HCT116 (cell line): ENCODE measurements at regions of chr18 and their contacts with region 1.

Region 1: GRCh38 chr18:8696749-8697211 is 8.6 kb upstream of the MTCL1 start:
- DNase-seq: peak; percentile 23
- ATAC-seq: peak; percentile 96
- H3K4me3 ChIP-seq: no peak overlapping the region
- H3K27ac ChIP-seq: no peak overlapping the region
- H3K4me1 ChIP-seq: peaks cover 2 to 8% of the 10 kb centered on the region in 2 experiments; a peak in 2 of 4 replicates
- H3K27me3 ChIP-seq: no peaks in the 10 kb centered on the region
- CTCF ChIP-seq: peak; percentile 68 to 85 (median 85)
- POLR2A ChIP-seq: no peak
- RAD21 ChIP-seq: peak; percentile 74

Region 2: GRCh38 chr18:8601277-8602032 is 95.3 kb before region 1 on chr18:
- CTCF ChIA-PET with region 1: no interaction called
- POLR2A ChIA-PET with region 1: no interaction called
- RAD21 ChIA-PET with region 1: no interaction called
- intact Hi-C with region 1: no loop called
- DNase-seq: no peak
- ATAC-seq: no peak
- H3K4me3 ChIP-seq: no peak overlapping the region
- H3K27ac ChIP-seq: no peak overlapping the region
- H3K4me1 ChIP-seq: no peaks in the 10 kb centered on the region
- H3K27me3 ChIP-seq: no peaks in the 10 kb centered on the region; the same call in 1 of the 2 replicates
- CTCF ChIP-seq: no peak
- POLR2A ChIP-seq: no peak
- RAD21 ChIP-seq: no peak

Region 3: DNA sequence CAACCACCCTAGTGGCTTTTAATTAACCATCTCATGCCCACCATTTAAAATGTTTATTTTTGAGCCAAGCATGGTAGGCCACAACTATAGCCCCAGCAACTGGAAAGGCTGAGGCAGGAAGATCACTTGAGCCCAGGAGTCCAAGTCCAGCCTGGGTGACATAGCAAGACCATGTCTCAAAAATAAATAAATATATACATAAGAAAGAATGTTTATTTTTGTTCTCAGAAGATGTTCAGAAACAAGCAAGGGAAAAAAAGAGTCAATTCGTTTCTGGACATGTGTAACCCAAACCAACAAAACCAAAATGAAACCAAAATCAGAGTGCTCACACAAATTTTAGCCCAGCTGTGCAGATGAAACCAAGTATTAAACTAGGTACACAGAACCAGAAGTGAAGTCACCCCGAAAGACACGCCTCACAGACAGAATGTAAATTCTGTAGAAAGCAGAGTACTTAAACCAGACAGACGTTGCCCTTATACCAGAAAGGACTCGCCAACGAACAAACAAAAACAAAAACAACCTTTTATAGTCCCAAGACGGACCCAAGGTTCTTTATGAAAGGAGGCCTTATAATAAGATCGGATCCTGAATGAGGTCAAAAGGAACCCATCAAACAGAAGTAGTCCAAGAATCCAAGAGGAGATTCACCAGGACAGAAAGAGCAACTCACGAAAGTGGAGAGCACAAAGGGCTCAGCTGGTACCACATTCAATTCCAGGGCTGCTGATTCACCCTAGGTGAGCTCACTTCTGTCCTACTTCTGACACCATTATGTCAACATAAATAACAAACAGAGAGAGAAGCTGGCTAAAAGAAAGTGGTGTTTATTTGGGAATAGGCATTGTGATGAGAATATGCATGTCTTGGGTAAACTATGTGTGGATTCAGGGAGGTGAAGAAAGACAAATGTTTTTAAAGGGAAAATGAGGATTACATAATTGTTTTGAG is 23.2 kb before region 1 on chr18:
- CTCF ChIA-PET with region 1: interaction called, 12 read pairs
- POLR2A ChIA-PET with region 1: no interaction called
- RAD21 ChIA-PET with region 1: no interaction called
- intact Hi-C with region 1: no loop called
- DNase-seq: no peak
- ATAC-seq: no peak
- H3K4me3 ChIP-seq: no peak overlapping the region
- H3K27ac ChIP-seq: no peak overlapping the region
- H3K4me1 ChIP-seq: no peaks in the 10 kb centered on the region
- H3K27me3 ChIP-seq: no peaks in the 10 kb centered on the region
- CTCF ChIP-seq: no peak
- POLR2A ChIP-seq: no peak
- RAD21 ChIP-seq: no peak

Region 4: GRCh38 chr18:8685141-8685913 is 11.5 kb before region 1 on chr18:
- CTCF ChIA-PET with region 1: interaction called, 21 read pairs
- POLR2A ChIA-PET with region 1: no interaction called
- RAD21 ChIA-PET with region 1: no interaction called
- intact Hi-C with region 1: no loop called
- DNase-seq: no peak
- ATAC-seq: no peak
- H3K4me3 ChIP-seq: no peak overlapping the region
- H3K27ac ChIP-seq: no peak overlapping the region
- H3K4me1 ChIP-seq: peaks cover 0 to 6% of the 10 kb centered on the region in 2 experiments; a peak in 1 of 4 replicates
- H3K27me3 ChIP-seq: no peaks in the 10 kb centered on the region
- CTCF ChIP-seq: no peak
- POLR2A ChIP-seq: no peak
- RAD21 ChIP-seq: no peak

Region 5: GRCh38 chr18:8794133-8794986 is 97.6 kb after region 1 on chr18:
- CTCF ChIA-PET with region 1: interaction called, 3 read pairs
- POLR2A ChIA-PET with region 1: no interaction called
- RAD21 ChIA-PET with region 1: no interaction called
- intact Hi-C with region 1: loop called (anchors 10 kb)
- DNase-seq: peak; percentile 23
- ATAC-seq: peak; percentile 37
- H3K4me3 ChIP-seq: no peak overlapping the region
- H3K27ac ChIP-seq: peak overlapping the region; percentile 55
- H3K4me1 ChIP-seq: peaks cover 47 to 57% of the 10 kb centered on the region in 2 experiments
- H3K27me3 ChIP-seq: no peaks in the 10 kb centered on the region
- CTCF ChIP-seq: no peak
- POLR2A ChIP-seq: no peak
- RAD21 ChIP-seq: no peak

Region 6: DNA sequence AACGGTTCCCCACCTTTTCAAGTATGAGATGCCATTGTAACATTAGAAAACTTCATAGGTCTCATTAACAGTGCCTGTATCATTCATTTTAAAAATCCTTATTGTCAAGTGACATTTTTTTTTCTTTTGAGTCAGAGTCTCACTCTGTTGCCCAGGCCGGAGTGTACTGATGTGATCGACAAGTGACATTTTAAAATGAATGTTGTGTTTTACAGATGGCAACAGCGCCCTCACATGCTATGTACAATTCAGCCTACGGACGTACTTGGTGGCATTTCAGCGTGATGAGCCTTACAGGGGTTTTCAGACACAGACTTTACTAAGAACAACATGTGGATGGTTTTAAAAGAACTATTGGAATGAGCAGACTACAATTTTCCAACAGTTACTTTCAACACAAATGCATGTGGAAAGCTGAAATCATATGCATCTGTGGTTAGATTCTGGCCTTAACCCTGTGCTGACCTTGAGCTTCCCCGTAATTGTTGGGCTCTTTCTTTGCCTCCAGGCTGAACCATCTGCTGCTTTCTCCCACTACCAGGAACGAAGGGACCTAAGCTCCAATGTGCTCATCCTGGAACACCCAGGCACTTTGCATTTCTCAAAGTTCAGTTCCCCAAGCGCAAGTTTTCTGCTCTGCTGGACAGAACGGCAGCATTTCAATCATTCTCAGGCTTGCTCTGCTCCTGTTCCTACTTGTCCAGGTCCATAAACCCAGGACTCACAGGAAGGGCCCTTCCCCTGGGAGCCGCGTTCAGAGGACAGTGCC is 285.8 kb after region 1 on chr18:
- CTCF ChIA-PET with region 1: interaction called, 19 read pairs
- POLR2A ChIA-PET with region 1: no interaction called
- RAD21 ChIA-PET with region 1: no interaction called
- intact Hi-C with region 1: loop called (anchors 1 kb)
- DNase-seq: peak; percentile 63
- ATAC-seq: peak; percentile 97
- H3K4me3 ChIP-seq: no peak overlapping the region
- H3K27ac ChIP-seq: no peak overlapping the region
- H3K4me1 ChIP-seq: peaks cover 0 to 9% of the 10 kb centered on the region in 2 experiments; a peak in 2 of 4 replicates
- H3K27me3 ChIP-seq: no peaks in the 10 kb centered on the region
- CTCF ChIP-seq: peak; percentile 55 to 82 (median 82)
- POLR2A ChIP-seq: no peak
- RAD21 ChIP-seq: peak; percentile 91

Region 7: GRCh38 chr18:9055185-9055584 is 358.4 kb after region 1 on chr18:
- CTCF ChIA-PET with region 1: no interaction called
- POLR2A ChIA-PET with region 1: no interaction called
- RAD21 ChIA-PET with region 1: no interaction called
- intact Hi-C with region 1: loop called (anchors 5 kb)
- DNase-seq: peak; percentile 40
- ATAC-seq: peak; percentile 70
- H3K4me3 ChIP-seq: no peak overlapping the region
- H3K27ac ChIP-seq: no peak overlapping the region
- H3K4me1 ChIP-seq: peaks cover 5 to 14% of the 10 kb centered on the region in 2 experiments; a peak in 3 of 4 replicates
- H3K27me3 ChIP-seq: no peaks in the 10 kb centered on the region
- CTCF ChIP-seq: peak in 2 of 3 experiments; percentile 45 to 49; a peak in 3 of 6 replicates
- POLR2A ChIP-seq: no peak
- RAD21 ChIP-seq: peak; percentile 73